Activated CD4-positive, alpha-beta memory T cell treated with anti-CD3 and anti-CD28 coated beads for 36 hours (primary cell): ENCODE measurements at regions of chr17 and their contacts with region 1.

Region 1: DNA sequence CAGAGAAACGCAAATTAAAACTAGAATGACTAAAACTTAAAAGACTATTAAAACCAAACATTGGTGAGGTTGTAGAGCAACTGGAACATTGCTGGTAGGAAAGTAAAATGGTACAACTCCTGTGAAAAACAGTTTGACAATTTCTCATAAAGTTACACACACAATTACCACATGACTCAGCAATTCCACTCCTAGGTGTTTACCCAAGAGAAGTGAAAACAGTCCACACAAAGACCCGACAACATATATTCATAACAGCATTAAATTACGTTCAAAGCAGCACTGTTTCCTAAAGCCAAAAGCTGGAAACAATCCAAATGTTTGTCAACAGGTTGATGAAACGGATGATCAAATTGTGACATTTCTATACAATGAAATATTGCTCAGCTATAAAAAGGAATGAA is 26.5 kb upstream of the ALOX12 start:
- DNase-seq: no peak
- H3K4me3 Mint-ChIP-seq: no peak overlapping the region
- H3K27ac Mint-ChIP-seq: peak overlapping the region; percentile 62
- H3K4me1 Mint-ChIP-seq: peaks cover 17% of the 10 kb centered on the region
- H3K27me3 Mint-ChIP-seq: no peaks in the 10 kb centered on the region

Region 2: DNA sequence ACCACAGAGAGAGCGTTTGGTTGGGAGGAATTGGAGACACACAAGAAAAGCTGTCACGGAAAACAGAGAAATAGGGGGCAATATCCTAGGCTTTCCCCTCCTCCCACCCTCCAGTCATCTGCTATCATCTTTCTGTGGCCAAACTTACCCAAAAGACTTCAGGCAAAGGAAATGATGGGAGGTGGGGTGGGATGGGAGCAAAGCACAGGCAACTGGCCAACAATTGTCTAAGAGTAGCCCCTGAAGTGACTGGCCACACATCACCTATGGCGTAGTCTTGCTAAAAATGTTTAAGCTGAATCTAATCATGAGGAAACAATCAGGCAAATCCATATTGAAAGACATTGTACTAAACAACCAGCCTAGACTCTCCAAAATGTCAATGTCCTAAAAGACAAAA is 20.3 kb before region 1 on chr17:
- CTCF ChIA-PET with region 1: no interaction called
- POLR2A ChIA-PET with region 1: interaction called, 3 read pairs
- intact Hi-C with region 1: loop called (anchors 1 kb)
- DNase-seq: no peak
- H3K4me3 Mint-ChIP-seq: no peak overlapping the region
- H3K27ac Mint-ChIP-seq: peak overlapping the region; percentile 30
- H3K4me1 Mint-ChIP-seq: peaks cover 11% of the 10 kb centered on the region
- H3K27me3 Mint-ChIP-seq: no peaks in the 10 kb centered on the region